Heart right ventricle (tissue), 16 donors: ENCODE measurements at regions of chrX and their contacts with region 1.

Region 1: DNA sequence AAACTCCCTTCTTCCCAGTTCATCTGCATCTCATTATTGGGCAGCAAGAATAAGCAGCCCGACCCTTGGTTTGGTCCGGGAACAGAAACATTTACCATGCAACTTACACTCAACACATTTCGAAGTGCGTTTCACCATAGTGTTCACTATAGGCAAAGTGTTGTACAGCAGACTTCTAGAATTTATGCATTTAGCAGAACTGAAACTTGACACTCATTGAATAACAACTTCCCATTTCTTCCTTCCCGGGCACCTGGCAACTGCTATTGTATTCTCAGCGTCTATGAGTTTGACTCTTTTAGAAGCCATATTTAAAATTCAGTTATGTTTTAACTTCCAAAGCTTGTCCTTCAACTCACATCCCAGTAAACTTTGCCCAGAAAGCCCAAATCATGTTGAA is 840.6 kb downstream of the NLGN4X start:
- DNase-seq: no peak
- ATAC-seq: no peak
- H3K4me3 ChIP-seq: no peak overlapping the region
- H3K27ac ChIP-seq: no peak overlapping the region
- H3K4me1 ChIP-seq: no peaks in the 10 kb centered on the region
- H3K27me3 ChIP-seq: no peaks in the 10 kb centered on the region
- CTCF ChIP-seq: no peak

Region 2: GRCh38 chrX:4932790-4933189 is 455.3 kb before region 1 on chrX:
- intact Hi-C with region 1: loop called in 1 of 10 experiments (anchors 5 kb)
- DNase-seq: no peak
- ATAC-seq: no peak
- H3K4me3 ChIP-seq: no peak overlapping the region
- H3K27ac ChIP-seq: no peak overlapping the region
- H3K4me1 ChIP-seq: peaks cover 0 to 21% (median 0%) of the 10 kb centered on the region in 9 donors
- H3K27me3 ChIP-seq: no peaks in the 10 kb centered on the region
- CTCF ChIP-seq: no peak